AG04449 (cell line): ENCODE measurements at regions of chr3 and their contacts with region 1.

Region 1: DNA sequence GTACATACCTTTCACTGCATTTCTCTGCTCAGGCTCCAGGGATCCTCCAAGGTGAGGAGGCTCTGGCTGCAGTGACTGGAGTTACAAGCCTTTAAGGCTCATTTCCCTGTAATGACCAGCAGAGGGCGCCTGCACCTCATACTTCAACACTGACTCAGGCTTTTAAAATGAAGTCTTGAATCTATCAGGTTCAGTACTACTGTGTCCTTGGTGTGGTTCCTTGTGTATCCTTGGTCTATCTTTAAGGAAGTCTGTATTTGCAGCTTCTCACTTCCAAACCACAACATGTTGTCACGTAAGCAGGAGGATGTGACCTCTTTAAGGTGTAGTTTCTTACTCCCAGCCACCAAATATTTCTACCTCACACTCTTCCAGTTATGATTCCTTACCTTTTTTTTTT is 122.5 kb upstream of the ZBED2 start:
- DNase-seq: peak; percentile 57
- H3K4me3 ChIP-seq: no peak overlapping the region
- CTCF ChIP-seq: peak; percentile 80

Region 2: DNA sequence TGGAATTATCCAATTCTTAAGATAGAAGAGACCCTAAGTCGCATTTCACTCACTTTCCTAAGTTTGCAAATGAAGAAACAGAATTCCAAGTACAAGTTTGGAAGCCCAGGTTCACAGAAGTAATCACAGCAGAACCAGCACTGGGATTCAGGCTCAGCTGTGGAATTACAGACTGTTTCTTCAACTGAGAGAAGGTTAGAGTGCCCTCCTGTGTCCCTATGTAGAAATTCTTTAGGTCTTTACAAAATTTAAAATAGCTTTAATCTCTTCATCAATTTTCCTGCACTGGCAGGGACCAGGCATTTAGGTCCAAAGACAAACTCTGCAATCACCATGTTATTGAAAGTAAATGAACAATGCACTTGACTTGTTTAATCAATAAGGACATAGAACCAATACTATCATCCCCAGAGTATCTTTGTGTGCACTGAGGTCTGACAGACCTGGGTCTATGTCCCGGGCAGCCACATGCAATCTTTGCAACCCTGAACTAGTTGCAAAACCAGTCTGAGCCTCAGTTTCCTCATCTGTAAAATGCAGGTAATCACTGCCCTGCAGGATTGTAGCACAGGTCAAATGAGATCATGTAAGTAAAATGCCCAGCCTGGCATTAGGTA is 26.2 kb before region 1 on chr3:
- CTCF ChIA-PET with region 1: interaction called, 67 read pairs
- POLR2A ChIA-PET with region 1: no interaction called
- DNase-seq: no peak
- H3K4me3 ChIP-seq: no peak overlapping the region
- CTCF ChIP-seq: peak; percentile 43

Region 3: DNA sequence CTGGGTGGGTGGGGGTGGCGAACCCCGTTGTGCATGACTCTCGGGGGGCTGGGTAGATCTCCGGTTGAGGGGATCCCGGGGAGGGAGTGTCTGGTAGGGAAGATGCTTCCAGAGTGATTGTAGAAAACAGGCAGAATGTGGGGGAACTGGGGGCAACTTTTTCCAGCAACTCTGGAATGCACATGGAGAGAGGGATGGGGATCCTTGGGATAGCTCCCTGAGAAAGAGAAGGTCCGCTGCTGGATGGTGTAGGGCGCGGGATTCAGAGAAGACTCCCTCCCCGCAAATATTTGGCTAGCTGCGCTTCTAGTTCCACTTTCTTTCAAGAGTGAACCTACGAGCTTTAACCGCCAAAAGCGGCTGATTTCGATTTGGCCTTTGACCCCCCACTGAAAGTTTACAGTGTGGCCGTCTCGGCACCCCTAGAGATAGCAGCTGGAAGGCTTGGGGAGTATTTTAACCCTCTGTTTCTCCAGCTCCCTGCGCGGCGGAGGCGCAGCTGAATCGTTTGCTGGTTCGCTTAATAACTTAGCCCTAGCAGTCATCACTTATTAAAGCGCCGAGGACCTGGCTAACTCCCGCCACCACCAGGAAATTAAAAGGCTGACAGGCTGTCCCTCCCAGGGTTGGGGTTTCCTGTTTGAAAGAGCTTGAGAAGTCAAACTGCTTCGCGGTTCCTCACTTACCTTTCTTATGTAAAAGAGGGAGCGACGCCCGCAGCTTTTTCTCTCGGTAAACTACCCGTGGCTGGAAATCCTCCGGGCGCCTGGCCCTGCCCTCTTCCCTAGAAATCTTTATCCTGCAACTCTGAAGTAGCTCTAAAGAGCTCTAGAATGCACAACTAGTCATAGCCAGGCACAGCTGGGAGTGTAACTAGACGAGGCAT is 142.6 kb after region 1 on chr3:
- CTCF ChIA-PET with region 1: interaction called, 408 read pairs
- POLR2A ChIA-PET with region 1: interaction called, 5 read pairs
- DNase-seq: no peak
- H3K4me3 ChIP-seq: peak overlapping the region; percentile 81
- CTCF ChIP-seq: peak; percentile 56

Region 4: DNA sequence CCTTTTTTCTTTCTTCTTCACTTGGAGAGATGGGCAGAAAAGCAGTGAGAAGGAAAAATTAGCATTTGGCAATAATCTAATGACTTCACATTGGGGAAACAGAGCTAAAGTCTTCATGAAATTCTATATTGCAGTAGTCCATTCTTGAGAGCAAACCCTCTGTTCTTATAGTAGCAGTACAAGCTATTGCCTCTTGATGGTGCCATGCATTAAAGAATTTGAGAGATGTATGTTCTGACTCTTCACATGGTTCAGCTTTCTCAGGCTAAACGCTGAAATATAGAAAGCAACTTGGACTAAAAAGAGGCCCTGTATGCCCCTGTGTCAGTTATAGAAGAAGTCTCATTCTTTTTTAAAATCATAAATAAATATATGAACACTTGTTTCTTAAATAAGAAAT is 177.5 kb after region 1 on chr3:
- CTCF ChIA-PET with region 1: interaction called, 74 read pairs
- POLR2A ChIA-PET with region 1: no interaction called
- DNase-seq: no peak
- H3K4me3 ChIP-seq: no peak overlapping the region
- CTCF ChIP-seq: peak; percentile 36

Region 5: GRCh38 chr3:111956995-111957734 is 239.6 kb after region 1 on chr3:
- CTCF ChIA-PET with region 1: interaction called, 39 read pairs
- POLR2A ChIA-PET with region 1: no interaction called
- DNase-seq: no peak
- H3K4me3 ChIP-seq: no peak overlapping the region
- CTCF ChIP-seq: no peak

Region 6: GRCh38 chr3:111989061-111989678 is 271.6 kb after region 1 on chr3:
- CTCF ChIA-PET with region 1: interaction called, 42 read pairs
- POLR2A ChIA-PET with region 1: no interaction called
- DNase-seq: peak; percentile 49
- H3K4me3 ChIP-seq: no peak overlapping the region
- CTCF ChIP-seq: peak; percentile 70